Activated CD4-positive, alpha-beta T cell treated with anti-CD3 and anti-CD28 coated beads for 36 hours (primary cell): ENCODE measurements at regions of chr14 and their contacts with region 1.

Region 1: GRCh38 chr14:64636208-64636979 is 67.8 kb upstream of the PLEKHG3 start:
- DNase-seq: peak; percentile 83
- ATAC-seq: peak; percentile 98
- H3K4me3 Mint-ChIP-seq: no peak overlapping the region
- H3K27ac Mint-ChIP-seq: no peak overlapping the region
- H3K4me1 Mint-ChIP-seq: peaks cover 3% of the 10 kb centered on the region
- H3K27me3 Mint-ChIP-seq: peaks cover 3% of the 10 kb centered on the region

Region 2: GRCh38 chr14:64232095-64232838 is 404.1 kb before region 1 on chr14:
- CTCF ChIA-PET with region 1: no interaction called
- POLR2A ChIA-PET with region 1: no interaction called
- intact Hi-C with region 1: no loop called
- DNase-seq: peak; percentile 42
- ATAC-seq: peak; percentile 76
- H3K4me3 Mint-ChIP-seq: no peak overlapping the region
- H3K27ac Mint-ChIP-seq: no peak overlapping the region
- H3K4me1 Mint-ChIP-seq: peaks cover 14% of the 10 kb centered on the region
- H3K27me3 Mint-ChIP-seq: no peaks in the 10 kb centered on the region

Region 3: DNA sequence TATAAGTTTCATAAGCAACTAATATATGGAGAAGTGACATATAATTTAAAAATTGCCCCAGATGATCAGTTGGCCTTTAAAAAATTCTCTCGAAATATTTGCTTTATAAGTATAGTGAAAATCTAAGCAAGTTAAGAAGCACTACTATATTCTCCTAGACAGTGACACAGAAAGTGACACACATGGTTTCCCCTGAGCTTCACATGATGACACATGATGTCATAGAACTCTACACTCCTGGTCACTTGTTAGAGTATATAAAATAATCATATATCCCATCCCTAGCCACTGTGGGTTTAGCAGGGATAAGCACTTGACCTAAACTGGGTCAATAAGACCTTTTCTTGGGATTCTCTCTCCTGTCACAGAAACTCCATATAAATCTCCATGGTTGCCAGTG is 290.9 kb before region 1 on chr14:
- CTCF ChIA-PET with region 1: interaction called, 32 read pairs
- POLR2A ChIA-PET with region 1: no interaction called
- intact Hi-C with region 1: loop called (anchors 1 kb)
- DNase-seq: no peak
- ATAC-seq: no peak
- H3K4me3 Mint-ChIP-seq: no peak overlapping the region
- H3K27ac Mint-ChIP-seq: no peak overlapping the region
- H3K4me1 Mint-ChIP-seq: no peaks in the 10 kb centered on the region
- H3K27me3 Mint-ChIP-seq: no peaks in the 10 kb centered on the region

Region 4: DNA sequence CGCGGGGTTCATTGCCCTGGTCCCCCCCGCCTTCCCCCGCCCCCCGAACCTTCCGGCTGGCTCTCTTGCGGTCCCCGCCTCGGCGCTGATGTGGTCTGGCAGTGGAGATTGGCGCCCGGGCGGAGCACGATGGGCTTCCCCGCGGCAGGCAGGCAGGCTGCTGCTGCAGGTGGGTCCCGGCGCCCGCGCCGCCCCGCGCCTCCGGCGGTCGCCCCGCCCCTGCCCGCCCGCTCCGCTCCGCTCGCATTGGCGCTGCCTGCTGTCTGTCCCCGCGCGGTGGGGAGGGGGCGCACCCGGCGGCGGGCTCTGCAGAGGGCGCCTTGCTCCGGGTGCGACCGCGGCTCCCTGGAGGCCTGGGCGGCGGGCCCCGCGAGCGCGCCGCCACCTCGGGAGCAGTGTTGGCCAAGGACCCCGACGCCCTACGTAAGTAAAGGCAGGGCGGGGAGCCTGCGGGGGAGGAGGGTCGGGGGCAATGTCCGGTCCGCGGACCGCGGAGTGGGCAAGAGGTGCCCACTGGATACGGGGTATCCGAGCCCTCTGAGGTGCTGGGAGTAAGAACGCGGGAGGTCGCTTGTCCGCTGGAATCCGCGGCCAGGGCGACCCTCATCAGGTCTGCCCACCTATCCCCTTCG is 171.1 kb before region 1 on chr14 and contains the start of gene AKAP5:
- CTCF ChIA-PET with region 1: interaction called, 7 read pairs
- POLR2A ChIA-PET with region 1: no interaction called
- intact Hi-C with region 1: loop called in 1 of 2 experiments (anchors 10 kb)
- DNase-seq: peak; percentile 70
- ATAC-seq: peak; percentile 79
- H3K4me3 Mint-ChIP-seq: peak within 1 kb of the TSS; percentile 74
- H3K27ac Mint-ChIP-seq: peak within 1 kb of the TSS; percentile 67
- H3K4me1 Mint-ChIP-seq: peaks cover 42% of the 10 kb centered on the region
- H3K27me3 Mint-ChIP-seq: no peaks in the 10 kb centered on the region
- total RNA-seq, gene AKAP5: 0.39 to 0.43 TPM

Region 5: DNA sequence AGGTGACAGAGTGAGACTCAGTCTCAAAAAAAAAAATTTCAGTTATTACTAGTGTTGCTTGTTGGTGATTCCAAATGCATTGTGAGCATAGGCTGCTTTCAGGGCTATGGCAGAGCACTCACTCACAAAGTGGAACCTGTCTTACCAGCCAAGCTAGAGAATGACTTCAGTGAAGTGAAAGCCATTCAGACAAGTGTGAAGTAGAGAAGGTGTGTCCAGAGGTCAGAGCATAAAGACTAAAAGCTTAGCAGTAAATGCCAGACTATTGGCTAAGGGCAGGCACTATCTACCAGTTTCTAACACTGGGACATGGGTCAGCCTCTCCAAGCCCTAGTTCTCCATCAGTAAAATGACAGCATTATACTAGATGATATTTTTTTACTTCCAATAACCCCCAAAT is 74.0 kb before region 1 on chr14:
- CTCF ChIA-PET with region 1: interaction called, 10 read pairs
- POLR2A ChIA-PET with region 1: no interaction called
- intact Hi-C with region 1: no loop called
- DNase-seq: no peak
- ATAC-seq: no peak
- H3K4me3 Mint-ChIP-seq: no peak overlapping the region
- H3K27ac Mint-ChIP-seq: no peak overlapping the region
- H3K4me1 Mint-ChIP-seq: peaks cover 3% of the 10 kb centered on the region
- H3K27me3 Mint-ChIP-seq: no peaks in the 10 kb centered on the region

Region 6: DNA sequence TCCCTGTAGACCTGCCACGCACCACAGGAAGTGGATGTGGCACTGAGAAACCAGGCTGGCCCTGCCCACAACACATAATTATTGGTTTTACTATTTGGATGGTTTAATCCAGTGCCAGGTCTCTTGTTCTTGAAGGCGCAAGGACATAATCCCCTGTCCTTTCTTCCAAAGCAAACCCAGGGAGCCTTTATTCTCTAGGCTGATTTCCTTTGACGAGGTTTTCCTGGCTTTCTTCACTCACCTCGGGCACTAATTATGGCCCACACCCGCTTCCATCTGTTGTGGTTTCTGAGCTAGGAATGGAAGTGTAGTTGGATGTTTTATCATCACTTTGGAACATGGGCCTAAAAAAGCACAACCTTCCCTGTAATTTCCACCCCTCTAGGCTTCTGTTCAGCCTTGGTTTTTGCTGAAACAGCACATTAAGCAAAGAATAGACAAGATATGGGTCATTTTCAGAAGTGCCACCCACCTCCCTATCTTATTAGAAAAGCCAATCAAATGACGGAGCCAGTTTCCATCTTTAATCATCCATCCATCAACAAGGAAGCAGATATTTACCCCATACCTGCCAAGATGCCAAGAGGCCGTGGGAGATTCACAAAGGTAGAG is 12.7 kb before region 1 on chr14:
- CTCF ChIA-PET with region 1: interaction called, 35 read pairs
- POLR2A ChIA-PET with region 1: no interaction called
- intact Hi-C with region 1: loop called in 1 of 2 experiments (anchors 1 kb)
- DNase-seq: no peak
- ATAC-seq: no peak
- H3K4me3 Mint-ChIP-seq: no peak overlapping the region
- H3K27ac Mint-ChIP-seq: no peak overlapping the region
- H3K4me1 Mint-ChIP-seq: no peaks in the 10 kb centered on the region
- H3K27me3 Mint-ChIP-seq: no peaks in the 10 kb centered on the region

Region 7: DNA sequence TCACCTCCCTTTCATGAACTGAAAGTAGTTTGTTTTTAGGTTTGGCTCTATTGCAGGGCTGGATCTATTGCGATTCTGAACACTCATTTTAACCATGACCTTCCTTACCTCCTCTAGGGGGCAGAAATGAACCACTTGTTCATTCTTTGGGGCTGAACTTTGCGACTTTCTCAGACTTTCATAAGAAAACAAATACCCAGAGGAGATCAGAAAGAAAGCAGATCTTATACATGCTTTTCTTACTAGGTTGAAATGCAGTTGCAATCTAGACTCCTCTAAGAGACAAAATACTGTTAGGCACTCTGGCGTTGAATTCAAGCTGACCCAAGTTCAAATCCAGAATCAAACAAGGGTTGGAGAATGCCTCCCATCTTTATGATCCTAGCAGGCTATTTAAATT is 35.2 kb after region 1 on chr14:
- CTCF ChIA-PET with region 1: interaction called, 15 read pairs
- POLR2A ChIA-PET with region 1: no interaction called
- intact Hi-C with region 1: no loop called
- DNase-seq: no peak
- ATAC-seq: peak; percentile 74
- H3K4me3 Mint-ChIP-seq: no peak overlapping the region
- H3K27ac Mint-ChIP-seq: no peak overlapping the region
- H3K4me1 Mint-ChIP-seq: peaks cover 17% of the 10 kb centered on the region
- H3K27me3 Mint-ChIP-seq: no peaks in the 10 kb centered on the region

Region 8: GRCh38 chr14:64775063-64775777 is 138.8 kb after region 1 on chr14:
- CTCF ChIA-PET with region 1: no interaction called
- POLR2A ChIA-PET with region 1: no interaction called
- intact Hi-C with region 1: no loop called
- DNase-seq: no peak
- ATAC-seq: no peak
- H3K4me3 Mint-ChIP-seq: no peak overlapping the region
- H3K27ac Mint-ChIP-seq: no peak overlapping the region
- H3K4me1 Mint-ChIP-seq: peaks cover 14% of the 10 kb centered on the region
- H3K27me3 Mint-ChIP-seq: no peaks in the 10 kb centered on the region

Region 9: DNA sequence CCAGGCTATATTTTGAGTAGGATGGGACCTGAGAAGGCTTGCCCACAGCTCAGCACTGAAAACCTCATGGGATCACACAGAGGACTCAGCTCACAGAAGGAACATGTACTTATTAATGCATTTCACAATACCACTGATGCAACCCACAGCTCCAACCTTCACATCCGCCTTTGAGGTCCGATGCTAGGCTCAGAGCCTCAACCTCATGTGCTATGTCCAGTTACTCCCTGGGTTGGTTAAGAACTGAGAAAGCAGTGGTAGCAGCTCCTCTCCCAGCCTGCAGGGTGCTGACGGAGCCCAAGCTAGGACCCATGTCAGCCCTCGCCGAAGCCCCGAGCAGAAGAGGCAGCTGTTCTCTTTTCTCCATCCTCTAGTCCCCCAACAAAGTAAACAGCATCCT is 190.5 kb after region 1 on chr14:
- CTCF ChIA-PET with region 1: no interaction called
- POLR2A ChIA-PET with region 1: no interaction called
- intact Hi-C with region 1: no loop called
- DNase-seq: no peak
- ATAC-seq: no peak
- H3K4me3 Mint-ChIP-seq: no peak overlapping the region
- H3K27ac Mint-ChIP-seq: no peak overlapping the region
- H3K4me1 Mint-ChIP-seq: no peaks in the 10 kb centered on the region
- H3K27me3 Mint-ChIP-seq: peaks cover 5% of the 10 kb centered on the region

Region 10: GRCh38 chr14:64838662-64839061 is 202.3 kb after region 1 on chr14:
- CTCF ChIA-PET with region 1: no interaction called
- POLR2A ChIA-PET with region 1: no interaction called
- intact Hi-C with region 1: no loop called
- DNase-seq: no peak
- ATAC-seq: no peak
- H3K4me3 Mint-ChIP-seq: no peak overlapping the region
- H3K27ac Mint-ChIP-seq: no peak overlapping the region
- H3K4me1 Mint-ChIP-seq: no peaks in the 10 kb centered on the region
- H3K27me3 Mint-ChIP-seq: peaks cover 21% of the 10 kb centered on the region